IMR-90 (cell line): ENCODE measurements at regions of chr10 and their contacts with region 1.

Region 1: GRCh38 chr10:36248304-36248981 is 606.3 kb upstream of the FZD8 start:
- DNase-seq: peak; percentile 16
- ATAC-seq: no peak; the same call in 1 of the 2 replicates
- H3K4me3 ChIP-seq: no peak overlapping the region
- H3K27ac ChIP-seq: no peak overlapping the region
- H3K4me1 ChIP-seq: peaks cover 2% of the 10 kb centered on the region
- H3K27me3 ChIP-seq: no peaks in the 10 kb centered on the region
- CTCF ChIP-seq: no peak
- POLR2A ChIP-seq: no peak
- RAD21 ChIP-seq: no peak

Region 2: DNA sequence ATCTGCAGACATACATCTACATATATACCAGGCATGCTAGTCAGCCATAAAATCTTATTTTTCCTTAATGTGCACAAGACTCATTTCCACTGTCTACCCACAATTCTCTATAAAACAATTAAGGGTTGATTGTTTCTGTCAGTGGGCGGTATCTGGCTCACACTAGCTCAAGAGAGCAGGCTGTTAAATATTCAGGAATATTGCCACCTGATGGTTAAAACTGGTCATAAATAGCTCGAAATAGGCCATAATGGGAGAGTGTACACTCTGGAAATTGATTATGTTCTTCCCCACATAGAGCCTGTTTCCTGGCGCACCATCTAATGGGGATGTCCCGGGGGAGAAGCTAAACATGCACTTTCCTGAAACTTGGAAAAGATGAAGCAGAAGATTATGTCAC is 256.3 kb after region 1 on chr10:
- CTCF ChIA-PET with region 1: no interaction called
- POLR2A ChIA-PET with region 1: interaction called, 13 read pairs
- dilution Hi-C with region 1: no loop called
- in situ Hi-C with region 1: no loop called
- intact Hi-C with region 1: no loop called
- DNase-seq: no peak
- ATAC-seq: no peak
- H3K4me3 ChIP-seq: no peak overlapping the region
- H3K27ac ChIP-seq: no peak overlapping the region
- H3K4me1 ChIP-seq: no peaks in the 10 kb centered on the region
- H3K27me3 ChIP-seq: no peaks in the 10 kb centered on the region
- CTCF ChIP-seq: no peak
- POLR2A ChIP-seq: no peak
- RAD21 ChIP-seq: 0 out of 2 replicates have a peak, but pooled peaks have one; percentile 18